ENCODE measurements at regions of chr17 and their contacts with region 1.

Region 1: DNA sequence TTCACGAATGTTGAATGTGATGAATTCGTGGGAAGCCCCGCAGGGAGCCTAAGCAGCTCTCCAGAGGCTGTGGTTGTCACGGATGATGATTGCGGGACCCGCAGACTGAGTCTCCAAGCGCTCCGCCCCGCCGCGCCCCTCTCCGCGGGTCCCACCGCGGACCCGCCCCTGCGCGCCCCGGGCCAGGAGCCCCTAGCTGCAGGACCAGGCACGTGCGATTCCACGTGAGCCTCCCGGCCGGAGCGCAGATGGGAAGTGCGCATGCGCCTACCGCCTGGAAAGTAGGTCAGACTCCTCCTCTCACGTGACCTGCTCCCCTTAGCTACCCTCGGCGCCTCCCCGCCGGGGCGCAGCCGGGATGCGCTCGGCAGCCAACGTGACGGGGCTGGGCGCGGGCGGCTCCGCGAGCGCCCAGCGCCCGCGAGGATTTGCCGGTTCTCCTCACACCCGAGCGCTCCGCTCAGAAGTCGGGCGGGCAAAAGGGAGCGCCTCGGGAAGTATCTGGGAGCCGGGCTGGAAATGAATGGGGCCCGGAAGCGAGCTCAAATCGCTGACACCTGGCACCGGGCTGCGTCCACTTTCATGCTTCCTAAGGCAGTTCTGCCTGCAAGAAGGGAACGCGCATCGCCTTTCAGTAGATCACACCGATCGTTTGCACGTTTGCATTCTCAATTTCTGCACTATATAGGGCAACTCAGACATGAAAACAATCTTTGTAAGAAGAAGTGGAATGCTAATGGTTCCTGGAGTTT is 26.4 kb upstream of the HLF start:
- DNase-seq: peak; percentile 66 to 95
- H3K4me3 ChIP-seq: peak overlapping the region; percentile 55 to 65
- H3K27ac ChIP-seq: peak overlapping the region; percentile 33 to 47
- H3K4me1 ChIP-seq: peaks cover 5 to 10% of the 10 kb centered on the region in 2 donors
- H3K27me3 ChIP-seq: no peaks in the 10 kb centered on the region
- CTCF ChIP-seq: no peak

Region 2: DNA sequence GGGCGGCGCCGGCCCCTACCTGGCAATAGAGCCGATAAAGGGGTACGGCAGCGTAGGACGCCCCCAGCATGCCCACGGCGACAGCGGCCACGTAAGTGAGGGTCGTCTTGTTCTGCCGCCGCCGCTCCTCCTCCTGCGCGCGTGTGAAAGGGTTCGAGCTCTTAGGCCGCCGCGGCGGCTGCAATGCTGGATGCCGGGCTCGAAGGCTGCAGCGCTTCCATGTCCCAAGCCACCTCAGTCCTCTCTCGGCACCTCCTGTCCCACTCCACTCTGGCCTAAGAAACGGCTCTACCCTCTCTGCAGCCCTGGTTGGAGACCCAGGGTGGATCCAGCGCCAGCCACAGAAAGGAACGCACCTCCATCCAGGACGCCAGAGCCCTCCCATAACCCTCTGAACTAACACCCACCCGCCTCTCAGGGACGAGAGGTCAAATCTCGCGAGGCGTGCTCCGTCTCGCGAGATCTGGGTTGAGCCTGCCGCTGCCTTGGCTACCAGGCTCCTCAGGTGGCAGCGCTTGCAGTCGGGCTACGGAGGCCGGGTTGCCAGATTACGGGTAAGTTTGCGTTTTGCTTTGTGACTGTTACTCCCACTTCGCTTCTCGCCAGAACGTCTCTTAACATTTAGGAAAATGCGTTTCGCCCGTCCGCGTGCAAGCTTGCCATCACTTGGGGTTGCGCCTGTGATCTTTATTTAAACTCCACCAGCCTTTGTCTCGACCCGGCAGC is 269.9 kb before region 1 on chr17 and contains the starts of genes COX11 and STXBP4:
- intact Hi-C with region 1: loop called (anchors 5 kb)
- DNase-seq: peak; percentile 90 to 98
- H3K4me3 ChIP-seq: peak within 1 kb of the TSS; percentile 75 to 95
- H3K27ac ChIP-seq: peak within 1 kb of the TSS; percentile 82 to 90
- H3K4me1 ChIP-seq: peaks cover 4 to 11% of the 10 kb centered on the region in 2 donors
- H3K27me3 ChIP-seq: no peaks in the 10 kb centered on the region
- CTCF ChIP-seq: peak in 1 of 3 experiments; percentile 51
- total RNA-seq, gene COX11: 19.6 TPM
- total RNA-seq, gene STXBP4: 4.9 TPM

Region 3: GRCh38 chr17:55198690-55199370 is 39.5 kb before region 1 on chr17:
- intact Hi-C with region 1: no loop called
- DNase-seq: no peak
- H3K4me3 ChIP-seq: no peak overlapping the region
- H3K27ac ChIP-seq: no peak overlapping the region
- H3K4me1 ChIP-seq: no peaks in the 10 kb centered on the region
- H3K27me3 ChIP-seq: no peaks in the 10 kb centered on the region
- CTCF ChIP-seq: no peak

Region 4: DNA sequence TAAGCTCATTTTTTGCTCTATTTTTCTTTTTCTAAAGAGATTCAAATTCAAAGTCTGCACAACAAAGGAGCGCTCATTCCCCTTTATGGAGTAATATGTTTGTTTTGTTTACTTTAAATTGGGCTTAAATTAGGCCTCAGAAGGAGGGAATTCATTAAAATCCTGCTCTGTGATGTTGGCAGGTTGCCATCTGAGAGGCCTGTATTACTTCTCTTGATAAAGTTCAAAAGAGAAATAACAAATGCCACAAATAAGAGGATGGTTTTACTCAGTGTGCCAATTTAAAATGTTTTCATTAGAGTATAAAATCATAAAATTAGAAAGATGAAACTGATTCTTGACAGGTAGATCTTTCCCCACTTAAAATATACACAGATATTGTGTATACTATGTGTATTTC is 28.1 kb before region 1 on chr17:
- intact Hi-C with region 1: no loop called
- DNase-seq: no peak
- H3K4me3 ChIP-seq: no peak overlapping the region
- H3K27ac ChIP-seq: no peak overlapping the region
- H3K4me1 ChIP-seq: no peaks in the 10 kb centered on the region
- H3K27me3 ChIP-seq: no peaks in the 10 kb centered on the region
- CTCF ChIP-seq: no peak

Region 5: GRCh38 chr17:55295411-55296170 is 57.2 kb after region 1 on chr17:
- intact Hi-C with region 1: loop called (anchors 2 kb)
- DNase-seq: peak in 1 of 2 donors; percentile 82
- H3K4me3 ChIP-seq: no peak overlapping the region
- H3K27ac ChIP-seq: peak overlapping the region; percentile 58 to 64
- H3K4me1 ChIP-seq: peaks cover 0 to 6% of the 10 kb centered on the region in 2 donors
- H3K27me3 ChIP-seq: no peaks in the 10 kb centered on the region
- CTCF ChIP-seq: peak; percentile 78 to 87 (median 85)